Sigmoid colon (tissue), 7 donors: ENCODE measurements at regions of chr2 and their contacts with region 1.

Region 1: DNA sequence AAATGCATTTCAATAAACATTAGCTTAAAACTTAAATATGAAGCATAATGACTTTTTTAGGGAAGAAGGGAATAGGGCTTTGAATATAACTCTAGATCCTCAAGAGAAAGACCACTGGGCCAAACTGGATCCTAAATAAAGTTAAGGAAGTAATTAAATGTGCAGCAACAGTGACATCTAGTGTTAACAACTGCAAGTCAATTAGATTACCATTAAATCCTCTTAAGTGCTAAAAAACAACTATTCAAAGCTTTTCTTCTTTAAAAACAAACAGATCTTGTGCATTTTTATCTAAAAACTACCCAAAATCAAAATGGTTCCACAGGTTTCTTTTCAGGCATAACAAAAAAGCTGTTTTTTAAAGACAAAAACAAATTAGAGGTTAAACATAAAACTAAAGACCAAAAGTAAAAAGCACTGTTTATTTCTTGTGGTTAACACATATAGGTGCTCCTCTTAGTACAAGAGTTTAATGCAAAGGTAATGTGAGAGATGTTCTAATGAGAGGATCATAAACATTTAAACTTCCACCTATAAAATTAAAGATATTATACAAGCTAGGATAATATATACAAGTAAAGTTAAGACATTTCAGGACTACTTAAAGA is 111.4 kb downstream of the THADA start:
- DNase-seq: no peak
- H3K4me3 ChIP-seq: no peak overlapping the region
- H3K27ac ChIP-seq: peak overlapping the region; percentile 68 to 80 (median 76)
- H3K4me1 ChIP-seq: peaks cover 0 to 41% (median 29%) of the 10 kb centered on the region in 4 donors
- H3K27me3 ChIP-seq: no peaks in the 10 kb centered on the region
- CTCF ChIP-seq: peak; percentile 43 to 75 (median 66)
- EP300 ChIP-seq: no peak
- POLR2A ChIP-seq: no peak

Region 2: GRCh38 chr2:42828487-42829425 is 655.7 kb before region 1 on chr2:
- intact Hi-C with region 1: loop called (anchors 2 kb)
- DNase-seq: peak; percentile 89
- H3K4me3 ChIP-seq: no peak overlapping the region
- H3K27ac ChIP-seq: peak overlapping the region in 2 of 4 donors; percentile 45 to 48
- H3K4me1 ChIP-seq: peaks cover 0 to 26% (median 22%) of the 10 kb centered on the region in 4 donors
- H3K27me3 ChIP-seq: no peaks in the 10 kb centered on the region
- CTCF ChIP-seq: peak; percentile 80 to 97 (median 94)
- EP300 ChIP-seq: no peak
- POLR2A ChIP-seq: no peak

Region 3: DNA sequence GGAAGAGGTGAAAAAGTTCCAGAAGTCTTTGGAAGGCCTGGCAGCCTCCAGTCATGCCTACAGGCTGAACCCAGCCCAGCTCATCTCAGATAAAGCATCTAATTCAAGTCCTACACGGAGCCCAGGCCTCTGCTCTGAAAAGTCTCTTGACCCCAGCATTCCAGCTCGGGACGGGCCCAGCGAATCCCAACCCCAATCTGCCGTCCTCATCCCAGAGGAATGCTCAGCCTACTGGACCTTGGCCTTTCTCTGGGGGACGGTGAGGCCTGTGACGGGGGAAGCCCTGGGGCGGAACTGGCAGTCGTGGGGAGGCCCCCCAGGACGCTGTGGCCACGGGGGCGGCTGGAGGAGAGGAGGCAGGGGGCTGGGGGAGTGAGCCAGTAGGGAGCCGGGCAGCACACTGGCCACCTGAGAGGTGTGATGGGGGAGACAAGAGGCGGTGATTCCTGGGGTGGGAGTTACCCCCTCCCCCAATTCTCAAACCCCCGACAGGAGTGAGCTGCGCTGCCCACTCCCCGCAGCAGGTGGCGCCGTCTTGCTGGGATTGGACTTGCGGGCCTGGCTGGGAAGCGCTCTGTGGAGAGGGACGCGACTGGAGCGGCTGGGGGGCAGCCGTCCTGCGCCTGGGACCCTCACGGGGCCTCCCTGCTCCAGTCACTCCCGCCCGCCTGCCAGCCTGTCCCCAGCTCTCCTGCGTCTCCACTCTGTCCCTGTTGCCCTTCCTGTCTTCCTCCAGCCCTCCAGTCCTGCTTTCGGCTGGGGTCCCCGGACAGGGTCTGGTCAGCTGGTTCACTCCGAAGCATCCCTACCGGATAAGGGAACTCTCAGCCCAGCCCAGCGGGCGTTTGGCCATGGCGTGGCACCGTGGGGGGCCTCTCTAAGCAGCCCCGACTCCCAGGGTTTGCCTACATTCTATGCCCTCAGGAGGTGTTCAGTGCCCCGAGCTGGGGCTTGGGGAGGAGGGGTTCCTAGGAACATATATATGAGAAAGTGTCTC is 509.4 kb before region 1 on chr2:
- intact Hi-C with region 1: loop called (anchors 2 kb)
- DNase-seq: peak; percentile 89
- H3K4me3 ChIP-seq: peak overlapping the region; percentile 9 to 49 (median 44)
- H3K27ac ChIP-seq: peak overlapping the region; percentile 26 to 71 (median 66)
- H3K4me1 ChIP-seq: peaks cover 0 to 28% (median 20%) of the 10 kb centered on the region in 4 donors
- H3K27me3 ChIP-seq: no peaks in the 10 kb centered on the region
- CTCF ChIP-seq: peak; percentile 94 to 97 (median 96)
- EP300 ChIP-seq: no peak
- POLR2A ChIP-seq: no peak

Region 4: GRCh38 chr2:43083710-43084698 is 400.4 kb before region 1 on chr2:
- intact Hi-C with region 1: loop called (anchors 5 kb)
- DNase-seq: peak; percentile 88
- H3K4me3 ChIP-seq: no peak overlapping the region
- H3K27ac ChIP-seq: peak overlapping the region; percentile 88 to 95 (median 92)
- H3K4me1 ChIP-seq: peaks cover 0 to 87% (median 83%) of the 10 kb centered on the region in 4 donors
- H3K27me3 ChIP-seq: no peaks in the 10 kb centered on the region
- CTCF ChIP-seq: no peak
- EP300 ChIP-seq: peak in 2 of 4 donors; percentile 61 to 77
- POLR2A ChIP-seq: no peak

Region 5: GRCh38 chr2:43526994-43527393 is 42.6 kb after region 1 on chr2:
- intact Hi-C with region 1: loop called (anchors 5 kb)
- DNase-seq: no peak
- H3K4me3 ChIP-seq: no peak overlapping the region
- H3K27ac ChIP-seq: peak overlapping the region; percentile 9 to 77 (median 74)
- H3K4me1 ChIP-seq: peaks cover 0 to 53% (median 49%) of the 10 kb centered on the region in 4 donors
- H3K27me3 ChIP-seq: no peaks in the 10 kb centered on the region
- CTCF ChIP-seq: no peak
- EP300 ChIP-seq: peak in 2 of 4 donors; percentile 67 to 75
- POLR2A ChIP-seq: no peak

Region 6: GRCh38 chr2:43718530-43719124 is 234.2 kb after region 1 on chr2:
- intact Hi-C with region 1: no loop called
- DNase-seq: no peak
- H3K4me3 ChIP-seq: no peak overlapping the region
- H3K27ac ChIP-seq: no peak overlapping the region
- H3K4me1 ChIP-seq: no peaks in the 10 kb centered on the region
- H3K27me3 ChIP-seq: no peaks in the 10 kb centered on the region
- CTCF ChIP-seq: no peak
- EP300 ChIP-seq: no peak
- POLR2A ChIP-seq: no peak

Region 7: GRCh38 chr2:44181648-44182047 is 697.2 kb after region 1 on chr2:
- intact Hi-C with region 1: no loop called
- DNase-seq: no peak
- H3K4me3 ChIP-seq: no peak overlapping the region
- H3K27ac ChIP-seq: no peak overlapping the region
- H3K4me1 ChIP-seq: peaks cover 0 to 65% (median 30%) of the 10 kb centered on the region in 4 donors
- H3K27me3 ChIP-seq: no peaks in the 10 kb centered on the region
- CTCF ChIP-seq: no peak
- EP300 ChIP-seq: no peak
- POLR2A ChIP-seq: no peak